Head of caudate nucleus (tissue), 42 donors: ENCODE measurements at regions of chr9 and their contacts with region 1.

Region 1: GRCh38 chr9:114906908-114907571 is 23.4 kb downstream of the TNFSF8 start:
- DNase-seq: peak in 19 of 42 donors; percentile 8 to 57 (median 27)

Region 2: DNA sequence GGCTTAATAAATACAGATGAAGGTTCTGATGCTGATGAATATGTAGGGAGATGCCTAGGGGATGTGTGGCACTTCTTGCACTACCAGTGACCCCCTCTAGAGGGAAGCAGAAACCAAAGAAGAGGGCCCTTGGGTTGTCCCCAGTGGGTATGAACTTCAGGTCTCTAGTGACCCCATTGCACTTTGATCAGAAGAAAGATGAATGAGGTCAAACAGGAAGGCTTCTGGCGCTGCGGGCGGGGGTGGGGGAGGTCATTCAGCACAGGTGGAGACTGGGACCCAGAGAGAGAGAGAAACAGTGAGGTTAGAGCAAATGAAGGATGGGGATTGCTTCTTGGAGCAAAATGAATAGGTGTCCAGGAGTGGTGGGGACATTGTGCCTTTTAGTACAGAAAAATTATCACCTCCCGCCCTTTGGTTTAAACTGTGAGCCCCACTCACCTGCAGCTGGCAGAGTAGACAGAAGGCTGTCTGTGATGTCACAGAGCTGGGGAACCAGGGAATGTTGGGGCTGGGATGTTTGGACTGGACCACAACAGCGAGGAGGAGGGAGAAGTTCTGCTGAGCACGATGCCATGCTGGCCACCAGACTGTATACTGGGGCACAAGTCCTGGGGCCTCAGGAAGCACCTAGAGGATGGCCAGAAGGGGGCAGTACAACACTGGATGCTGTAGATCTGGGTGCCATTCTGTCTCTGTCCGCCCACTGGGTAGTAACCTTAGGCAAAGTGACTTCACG is 225.3 kb before region 1 on chr9 and contains the start of gene TEX48:
- intact Hi-C with region 1: loop called (anchors 5 kb)
- DNase-seq: peak in 39 of 42 donors; percentile 18 to 78 (median 52)

Region 3: DNA sequence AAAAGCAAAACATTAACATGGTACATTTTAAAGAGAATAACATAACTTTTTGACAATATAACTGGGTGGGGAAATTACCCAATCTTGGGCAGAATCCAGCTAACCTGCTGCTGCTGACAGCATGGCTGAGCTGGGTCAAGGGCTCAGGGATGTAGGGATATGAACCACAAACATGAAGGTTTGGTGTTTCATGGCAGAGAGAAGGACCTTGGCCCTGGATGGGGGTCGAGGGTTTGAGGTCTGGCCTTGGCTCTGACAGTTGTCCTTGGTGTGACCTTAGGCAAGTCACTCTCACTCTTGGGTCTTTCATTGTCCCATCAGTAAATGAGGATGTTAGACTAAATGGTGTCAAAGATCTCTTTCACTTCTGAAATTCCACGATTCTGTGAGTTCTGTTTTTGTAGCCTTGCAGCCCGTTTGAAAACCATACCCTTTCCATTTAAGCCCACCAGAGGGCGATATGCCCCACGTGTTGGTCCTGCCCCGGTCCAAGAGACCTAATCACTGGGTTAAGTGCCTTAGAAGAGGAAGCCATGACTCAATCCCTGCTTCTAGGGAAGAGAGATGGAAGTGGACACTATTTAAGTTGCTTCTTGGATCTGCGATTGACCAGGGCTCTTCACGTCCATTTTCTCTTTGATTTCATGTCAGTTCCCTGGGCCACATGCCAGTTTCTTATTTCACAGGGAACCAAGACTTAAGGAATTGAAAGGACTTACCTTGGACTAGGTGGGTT is 168.3 kb before region 1 on chr9:
- intact Hi-C with region 1: loop called (anchors 5 kb)
- DNase-seq: peak; percentile 21 to 89 (median 73)